ENCODE measurements at regions of chr18 and their contacts with region 1.

Region 1: GRCh38 chr18:23032030-23032582 is 99.0 kb downstream of the RBBP8 start:
- DNase-seq: peak; percentile 83
- ATAC-seq: peak; percentile 71
- H3K4me3 ChIP-seq: no peak overlapping the region
- H3K27ac ChIP-seq: peak overlapping the region; percentile 97
- H3K4me1 ChIP-seq: peaks cover 8% of the 10 kb centered on the region
- H3K27me3 ChIP-seq: no peaks in the 10 kb centered on the region
- CTCF ChIP-seq: no peak
- POLR2A ChIP-seq: no peak
- RAD21 ChIP-seq: no peak

Region 2: DNA sequence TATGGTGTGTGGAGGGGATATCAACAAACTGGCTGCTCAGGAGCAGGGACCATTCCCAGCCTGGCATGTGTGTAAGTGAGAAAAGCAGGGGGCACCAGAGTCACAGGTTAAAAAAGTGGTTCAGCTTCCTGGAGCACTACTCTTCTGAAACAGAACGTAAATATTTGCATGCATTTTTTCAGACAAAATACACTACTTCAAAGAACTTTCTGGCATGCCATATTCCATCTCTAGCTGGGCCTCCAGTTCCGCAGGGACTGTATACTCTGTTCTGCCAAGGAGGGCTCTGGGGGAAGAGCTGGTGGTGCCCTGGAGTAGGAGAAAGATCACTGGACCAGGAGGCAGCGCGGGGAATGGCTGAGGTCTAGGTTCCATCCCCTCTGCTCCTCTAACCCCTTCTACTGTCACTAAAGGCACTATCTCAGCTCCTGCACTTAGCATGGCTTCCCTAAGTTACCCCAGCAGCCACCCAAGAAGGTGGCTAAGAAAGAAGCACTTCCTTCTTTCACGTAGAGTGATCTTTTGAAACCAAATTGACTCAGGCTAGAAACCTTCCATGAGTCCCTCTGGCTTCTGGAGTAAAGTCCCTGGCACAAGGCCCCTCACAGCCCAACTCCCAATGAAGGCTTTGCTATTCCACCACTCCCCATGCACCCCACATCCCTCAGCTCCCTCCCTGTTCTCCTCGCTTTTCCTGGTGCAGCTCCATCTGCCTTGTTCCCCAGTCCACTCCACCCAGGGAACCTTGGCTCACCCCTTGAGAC is 45.6 kb after region 1 on chr18:
- CTCF ChIA-PET with region 1: interaction called, 5 read pairs
- POLR2A ChIA-PET with region 1: no interaction called
- dilution Hi-C with region 1: no loop called
- in situ Hi-C with region 1: no loop called
- intact Hi-C with region 1: loop called (anchors 5 kb)
- DNase-seq: no peak
- ATAC-seq: peak; percentile 19; the same call in 1 of the 2 replicates
- H3K4me3 ChIP-seq: no peak overlapping the region
- H3K27ac ChIP-seq: peak overlapping the region; percentile 65
- H3K4me1 ChIP-seq: peaks cover 14% of the 10 kb centered on the region
- H3K27me3 ChIP-seq: no peaks in the 10 kb centered on the region
- CTCF ChIP-seq: peak; percentile 28; the same call in 1 of the 2 replicates
- POLR2A ChIP-seq: no peak
- RAD21 ChIP-seq: peak; percentile 41

Region 3: GRCh38 chr18:23115683-23116096 is 83.6 kb after region 1 on chr18:
- CTCF ChIA-PET with region 1: no interaction called
- POLR2A ChIA-PET with region 1: no interaction called
- dilution Hi-C with region 1: no loop called
- in situ Hi-C with region 1: no loop called
- intact Hi-C with region 1: loop called (anchors 1 kb)
- DNase-seq: peak; percentile 100
- ATAC-seq: peak; percentile 94
- H3K4me3 ChIP-seq: no peak overlapping the region
- H3K27ac ChIP-seq: peak overlapping the region; percentile 89; the same call in 1 of the 2 replicates
- H3K4me1 ChIP-seq: peaks cover 21% of the 10 kb centered on the region
- H3K27me3 ChIP-seq: no peaks in the 10 kb centered on the region
- CTCF ChIP-seq: no peak
- POLR2A ChIP-seq: peak; percentile 58
- RAD21 ChIP-seq: no peak

Region 4: GRCh38 chr18:23207191-23207955 is 175.3 kb after region 1 on chr18:
- CTCF ChIA-PET with region 1: no interaction called
- POLR2A ChIA-PET with region 1: no interaction called
- dilution Hi-C with region 1: no loop called
- in situ Hi-C with region 1: no loop called
- intact Hi-C with region 1: loop called (anchors 5 kb)
- DNase-seq: peak; percentile 68
- ATAC-seq: peak; percentile 58
- H3K4me3 ChIP-seq: no peak overlapping the region
- H3K27ac ChIP-seq: no peak overlapping the region
- H3K4me1 ChIP-seq: peaks cover 17% of the 10 kb centered on the region
- H3K27me3 ChIP-seq: no peaks in the 10 kb centered on the region
- CTCF ChIP-seq: peak; percentile 30
- POLR2A ChIP-seq: no peak
- RAD21 ChIP-seq: peak; percentile 6; the same call in 1 of the 2 replicates

Region 5: GRCh38 chr18:23228102-23229061 is 196.3 kb after region 1 on chr18:
- CTCF ChIA-PET with region 1: interaction called, 4 read pairs
- POLR2A ChIA-PET with region 1: no interaction called
- dilution Hi-C with region 1: no loop called
- in situ Hi-C with region 1: no loop called
- intact Hi-C with region 1: loop called (anchors 5 kb)
- DNase-seq: peak; percentile 75
- ATAC-seq: no peak
- H3K4me3 ChIP-seq: no peak overlapping the region
- H3K27ac ChIP-seq: peak overlapping the region; percentile 72
- H3K4me1 ChIP-seq: peaks cover 38% of the 10 kb centered on the region
- H3K27me3 ChIP-seq: no peaks in the 10 kb centered on the region
- CTCF ChIP-seq: no peak
- POLR2A ChIP-seq: no peak
- RAD21 ChIP-seq: no peak

Region 6: DNA sequence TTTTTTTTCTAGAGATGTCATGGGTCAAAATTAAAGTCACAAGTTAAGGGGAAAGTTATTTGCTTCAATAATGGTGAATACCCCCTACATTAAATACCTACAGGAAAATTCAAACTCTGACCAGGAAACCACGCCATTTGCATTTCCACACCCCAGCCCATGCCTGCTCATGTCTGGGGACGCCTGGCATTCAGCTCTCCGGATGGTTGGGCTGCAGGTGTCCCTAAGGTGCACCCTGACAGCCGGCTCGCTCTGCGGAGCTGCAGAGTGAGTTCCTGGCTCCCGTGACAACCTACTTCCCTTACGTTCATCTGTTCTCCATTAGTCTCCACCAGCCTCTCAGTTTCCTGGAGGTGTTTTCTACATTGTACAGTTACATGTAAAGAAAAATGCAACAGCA is 298.3 kb after region 1 on chr18:
- CTCF ChIA-PET with region 1: no interaction called
- POLR2A ChIA-PET with region 1: no interaction called
- dilution Hi-C with region 1: no loop called
- in situ Hi-C with region 1: no loop called
- intact Hi-C with region 1: no loop called
- DNase-seq: no peak
- ATAC-seq: no peak
- H3K4me3 ChIP-seq: no peak overlapping the region
- H3K27ac ChIP-seq: no peak overlapping the region
- H3K4me1 ChIP-seq: no peaks in the 10 kb centered on the region
- H3K27me3 ChIP-seq: no peaks in the 10 kb centered on the region
- CTCF ChIP-seq: no peak
- POLR2A ChIP-seq: no peak
- RAD21 ChIP-seq: no peak

Region 7: GRCh38 chr18:23377669-23378301 is 345.7 kb after region 1 on chr18:
- CTCF ChIA-PET with region 1: interaction called, 7 read pairs
- POLR2A ChIA-PET with region 1: no interaction called
- dilution Hi-C with region 1: no loop called
- in situ Hi-C with region 1: no loop called
- intact Hi-C with region 1: loop called (anchors 1 kb)
- DNase-seq: peak; percentile 92
- ATAC-seq: peak; percentile 67
- H3K4me3 ChIP-seq: no peak overlapping the region
- H3K27ac ChIP-seq: peak overlapping the region; percentile 95
- H3K4me1 ChIP-seq: peaks cover 12% of the 10 kb centered on the region
- H3K27me3 ChIP-seq: no peaks in the 10 kb centered on the region
- CTCF ChIP-seq: no peak
- POLR2A ChIP-seq: no peak
- RAD21 ChIP-seq: no peak

Region 8: GRCh38 chr18:23406271-23406787 is 374.2 kb after region 1 on chr18:
- CTCF ChIA-PET with region 1: interaction called, 4 read pairs
- POLR2A ChIA-PET with region 1: no interaction called
- dilution Hi-C with region 1: no loop called
- in situ Hi-C with region 1: loop called (anchors 5 kb)
- intact Hi-C with region 1: loop called (anchors 2 kb)
- DNase-seq: peak; percentile 40
- ATAC-seq: peak; percentile 63; the same call in 1 of the 2 replicates
- H3K4me3 ChIP-seq: no peak overlapping the region
- H3K27ac ChIP-seq: no peak overlapping the region
- H3K4me1 ChIP-seq: peaks cover 6% of the 10 kb centered on the region
- H3K27me3 ChIP-seq: no peaks in the 10 kb centered on the region
- CTCF ChIP-seq: no peak
- POLR2A ChIP-seq: no peak
- RAD21 ChIP-seq: no peak

Measured in IMR-90 (cell line).